ENCODE measurements at regions of chr5 and their contacts with region 1.

Region 1: DNA sequence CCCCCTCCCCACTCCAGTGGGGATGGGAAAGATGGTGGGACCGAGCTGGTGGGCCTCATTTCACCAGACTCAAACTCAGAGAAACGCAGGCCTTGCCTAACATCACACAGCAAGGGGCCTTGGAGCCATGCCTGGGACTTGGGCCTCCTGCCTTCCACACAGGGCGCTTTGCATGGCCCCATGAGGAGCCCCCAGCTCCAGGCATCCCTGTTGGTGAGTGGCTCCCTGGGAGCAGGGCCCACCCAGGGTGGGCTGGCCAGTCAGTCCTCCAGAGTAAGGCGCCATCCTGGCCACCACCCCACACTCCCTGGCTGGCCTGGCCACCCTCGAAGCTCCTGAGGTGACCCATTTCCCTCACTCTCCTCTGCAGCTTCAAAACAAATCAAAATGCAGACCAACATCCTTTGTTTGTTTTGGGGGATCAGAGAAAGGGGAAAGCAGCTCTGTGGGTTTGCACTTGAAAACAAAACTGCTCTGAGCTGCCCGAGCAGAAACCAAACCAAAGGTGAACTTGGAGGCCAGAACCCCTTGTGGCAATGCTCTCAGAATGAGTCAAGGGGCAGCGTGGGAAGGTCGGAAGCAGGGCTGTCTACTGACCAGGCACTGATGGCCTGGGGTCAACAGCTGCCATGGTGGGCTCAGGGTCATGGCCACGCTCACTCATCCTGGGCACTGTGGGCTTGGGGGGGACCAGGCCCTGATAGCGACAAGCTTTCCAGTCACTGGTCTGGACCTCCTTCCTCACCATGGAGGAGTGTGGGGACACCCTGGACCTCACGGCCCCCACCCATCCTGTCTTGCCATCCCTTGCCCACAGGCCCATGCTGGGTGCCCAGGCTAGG is 37.0 kb upstream of the VDAC1 start:
- DNase-seq: no peak
- H3K4me3 ChIP-seq: no peak overlapping the region
- CTCF ChIP-seq: no peak

Region 2: GRCh38 chr5:134026521-134027268 is 15.1 kb before region 1 on chr5:
- CTCF ChIA-PET with region 1: interaction called, 82 read pairs
- POLR2A ChIA-PET with region 1: no interaction called
- DNase-seq: no peak
- H3K4me3 ChIP-seq: no peak overlapping the region
- CTCF ChIP-seq: peak; percentile 74

Region 3: GRCh38 chr5:134063188-134063820 is 21.5 kb after region 1 on chr5:
- CTCF ChIA-PET with region 1: interaction called, 34 read pairs
- POLR2A ChIA-PET with region 1: no interaction called
- DNase-seq: no peak
- H3K4me3 ChIP-seq: no peak overlapping the region
- CTCF ChIP-seq: no peak

Region 4: GRCh38 chr5:134083517-134083916 is 41.7 kb after region 1 on chr5:
- CTCF ChIA-PET with region 1: interaction called, 19 read pairs
- POLR2A ChIA-PET with region 1: no interaction called
- DNase-seq: no peak
- H3K4me3 ChIP-seq: no peak overlapping the region
- CTCF ChIP-seq: no peak

Region 5: DNA sequence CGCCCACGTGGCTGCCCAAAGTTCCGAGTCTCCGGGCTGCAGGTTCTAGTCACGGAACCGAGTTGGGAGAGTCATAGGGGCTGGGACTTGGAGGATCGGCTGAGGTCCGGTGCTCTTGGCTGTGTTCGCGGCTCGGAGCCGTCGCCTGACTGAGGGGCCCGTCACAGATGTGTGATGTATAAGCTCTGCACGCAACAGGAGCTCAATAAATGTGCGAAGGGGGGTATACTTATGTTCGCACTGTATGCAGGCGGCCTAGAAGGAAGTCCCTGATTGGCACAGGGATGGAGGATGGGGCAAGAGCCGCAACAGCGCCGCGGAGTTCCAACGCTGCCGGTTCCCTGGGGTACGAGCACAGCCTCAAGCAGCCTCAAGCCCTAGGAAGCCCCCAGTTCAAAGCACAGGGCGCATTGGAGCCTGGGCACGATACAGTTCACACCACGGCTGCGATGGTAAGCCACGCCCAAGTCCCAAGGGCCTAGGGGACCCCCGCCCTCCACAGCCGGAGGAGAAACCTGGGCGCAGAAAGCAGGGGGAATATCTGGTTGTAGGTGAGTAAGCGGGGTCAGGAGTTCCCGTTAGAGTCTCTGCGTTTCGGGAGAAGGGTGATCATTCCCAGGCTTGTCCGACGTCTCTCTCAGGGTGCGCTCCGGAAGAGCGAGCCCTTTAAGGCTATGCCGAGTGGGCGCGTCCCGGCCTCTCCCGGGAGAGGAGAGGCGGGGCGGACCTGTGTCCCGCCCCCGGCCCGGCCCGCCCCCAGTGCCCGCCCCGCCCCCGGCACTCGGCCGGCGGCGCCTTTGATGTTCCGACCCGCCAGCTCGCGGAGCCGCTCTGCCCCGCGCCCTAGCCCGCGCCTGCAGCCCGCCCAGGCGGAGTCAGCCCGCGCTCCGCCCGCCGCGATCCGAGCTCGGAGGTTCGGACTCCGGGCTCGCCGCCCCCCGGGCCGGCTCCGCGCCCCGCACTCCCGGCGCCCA is 72.4 kb after region 1 on chr5 and contains the start of gene TCF7:
- CTCF ChIA-PET with region 1: interaction called, 22 read pairs
- POLR2A ChIA-PET with region 1: no interaction called
- DNase-seq: no peak
- H3K4me3 ChIP-seq: peak within 1 kb of the TSS; percentile 62
- CTCF ChIP-seq: no peak

Region 6: GRCh38 chr5:134161513-134162395 is 120.0 kb after region 1 on chr5:
- CTCF ChIA-PET with region 1: interaction called, 1,500 read pairs
- POLR2A ChIA-PET with region 1: no interaction called
- DNase-seq: no peak
- H3K4me3 ChIP-seq: no peak overlapping the region
- CTCF ChIP-seq: no peak

Region 7: DNA sequence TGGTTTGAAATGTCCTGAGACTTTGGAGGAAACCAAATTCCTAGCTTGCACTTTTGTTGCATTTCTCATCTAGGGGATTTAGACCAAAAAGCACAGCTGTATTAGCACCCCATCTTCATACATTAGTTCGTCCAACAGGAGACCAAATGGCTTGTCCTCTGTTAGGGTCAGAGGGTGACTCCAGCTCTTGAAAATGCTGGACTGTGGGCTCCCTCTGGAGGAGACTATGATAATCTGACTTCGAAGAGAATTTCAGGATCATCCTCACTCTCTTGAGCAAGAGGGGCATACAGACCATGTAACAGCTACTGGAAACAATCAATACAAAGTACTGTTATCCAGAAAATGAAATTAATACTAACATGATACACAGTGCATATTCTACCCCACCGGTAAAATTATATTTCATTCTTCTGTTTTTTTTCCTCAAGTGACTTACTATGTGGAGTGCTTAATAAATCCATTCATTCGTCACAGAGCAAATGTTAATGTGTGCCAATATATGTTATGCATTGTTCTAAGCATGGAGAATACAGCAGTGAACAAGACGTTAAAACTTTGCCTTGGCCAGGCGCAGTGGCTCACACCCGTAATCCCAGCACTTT is 247.8 kb after region 1 on chr5:
- CTCF ChIA-PET with region 1: interaction called, 14 read pairs
- POLR2A ChIA-PET with region 1: no interaction called
- DNase-seq: peak; percentile 26
- H3K4me3 ChIP-seq: no peak overlapping the region
- CTCF ChIP-seq: peak; percentile 65